MCF 10A (cell line): ENCODE measurements at regions of chr9 and their contacts with region 1.

Region 1: DNA sequence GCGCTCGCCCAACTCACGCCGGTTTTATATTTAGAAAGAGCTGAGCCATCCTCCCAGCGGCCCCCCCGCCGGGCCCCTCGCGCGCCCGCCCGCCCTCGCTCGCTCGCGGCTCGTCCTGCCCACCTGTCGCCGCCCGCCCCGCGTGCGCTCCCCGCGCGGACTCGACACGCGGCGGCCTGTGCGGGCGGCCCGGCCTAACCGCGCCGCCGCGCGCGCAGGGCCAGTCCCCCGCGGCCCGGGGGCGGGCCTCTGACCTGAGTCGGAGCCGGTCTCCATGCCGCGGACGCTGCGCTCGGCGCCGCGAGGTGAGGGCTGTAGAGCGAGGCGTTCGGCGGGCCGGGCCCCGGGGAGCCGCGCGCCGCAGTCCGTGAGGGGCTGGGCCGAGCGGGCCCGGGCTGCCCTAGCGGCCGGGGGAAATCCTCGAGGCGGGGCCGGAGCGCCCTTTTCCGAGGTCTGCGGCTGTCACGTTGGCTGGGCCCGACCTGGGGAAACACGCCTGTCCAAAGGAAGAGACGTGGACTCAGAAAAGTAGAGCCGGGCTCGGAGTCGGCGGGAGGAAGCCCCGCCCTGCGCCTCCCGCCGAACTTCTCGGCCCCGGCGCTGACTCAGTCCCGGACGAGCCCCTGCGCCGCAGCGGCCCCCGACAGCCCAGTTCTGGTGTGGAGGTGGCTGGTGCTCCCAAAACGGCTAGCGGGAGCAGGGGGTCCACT is at the start of gene ECPAS:
- DNase-seq: peak; percentile 87
- H3K4me3 Mint-ChIP-seq: peak within 1 kb of the TSS; percentile 84
- H3K27ac Mint-ChIP-seq: peak within 1 kb of the TSS; percentile 86
- H3K4me1 Mint-ChIP-seq: peaks cover 15% of the 10 kb centered on the region
- H3K27me3 Mint-ChIP-seq: no peaks in the 10 kb centered on the region
- CTCF ChIP-seq: no peak
- total RNA-seq, gene ECPAS: 140 and 152 TPM in 2 replicates

Region 2: DNA sequence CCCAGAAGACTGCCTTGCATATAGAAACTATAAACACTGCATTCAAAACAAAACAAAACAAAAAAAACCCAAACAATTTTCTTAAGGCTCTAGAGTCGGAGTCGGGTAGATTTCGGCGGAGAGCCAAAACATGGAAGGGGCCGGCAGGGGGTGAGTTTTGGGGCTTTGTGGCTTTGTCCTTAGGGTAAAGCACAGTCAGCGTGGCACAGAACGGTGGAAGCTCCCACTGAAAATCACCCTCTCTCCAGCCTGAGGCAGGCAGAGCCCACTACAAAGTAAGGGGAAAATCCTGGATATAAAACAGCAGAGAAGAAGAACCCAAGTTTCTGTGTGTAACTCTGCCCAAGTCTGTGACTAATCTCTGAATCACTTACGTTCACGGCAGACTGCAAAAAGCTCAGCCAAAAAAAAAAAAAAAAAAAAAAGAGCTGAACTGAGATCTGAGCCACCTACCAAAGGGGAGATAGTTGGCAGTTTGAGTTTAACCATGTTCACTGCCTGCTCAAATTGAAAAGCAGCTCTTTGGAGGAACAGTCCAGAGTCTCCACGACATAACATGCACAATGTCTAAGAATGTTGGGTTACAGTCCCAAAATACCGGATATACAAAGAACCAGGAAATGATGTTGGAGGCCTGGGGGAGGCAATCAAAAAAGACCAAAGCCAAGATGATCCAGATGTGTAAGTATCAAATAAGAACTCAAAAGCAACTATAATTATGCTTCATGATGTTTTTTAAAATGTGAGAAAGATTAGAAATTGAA is 127.4 kb before region 1 on chr9:
- CTCF ChIA-PET with region 1: no interaction called
- POLR2A ChIA-PET with region 1: no interaction called
- intact Hi-C with region 1: no loop called
- DNase-seq: peak; percentile 85
- H3K4me3 Mint-ChIP-seq: peak overlapping the region; percentile 75
- H3K27ac Mint-ChIP-seq: peak overlapping the region; percentile 95
- H3K4me1 Mint-ChIP-seq: peaks cover 18% of the 10 kb centered on the region
- H3K27me3 Mint-ChIP-seq: no peaks in the 10 kb centered on the region
- CTCF ChIP-seq: no peak

Region 3: DNA sequence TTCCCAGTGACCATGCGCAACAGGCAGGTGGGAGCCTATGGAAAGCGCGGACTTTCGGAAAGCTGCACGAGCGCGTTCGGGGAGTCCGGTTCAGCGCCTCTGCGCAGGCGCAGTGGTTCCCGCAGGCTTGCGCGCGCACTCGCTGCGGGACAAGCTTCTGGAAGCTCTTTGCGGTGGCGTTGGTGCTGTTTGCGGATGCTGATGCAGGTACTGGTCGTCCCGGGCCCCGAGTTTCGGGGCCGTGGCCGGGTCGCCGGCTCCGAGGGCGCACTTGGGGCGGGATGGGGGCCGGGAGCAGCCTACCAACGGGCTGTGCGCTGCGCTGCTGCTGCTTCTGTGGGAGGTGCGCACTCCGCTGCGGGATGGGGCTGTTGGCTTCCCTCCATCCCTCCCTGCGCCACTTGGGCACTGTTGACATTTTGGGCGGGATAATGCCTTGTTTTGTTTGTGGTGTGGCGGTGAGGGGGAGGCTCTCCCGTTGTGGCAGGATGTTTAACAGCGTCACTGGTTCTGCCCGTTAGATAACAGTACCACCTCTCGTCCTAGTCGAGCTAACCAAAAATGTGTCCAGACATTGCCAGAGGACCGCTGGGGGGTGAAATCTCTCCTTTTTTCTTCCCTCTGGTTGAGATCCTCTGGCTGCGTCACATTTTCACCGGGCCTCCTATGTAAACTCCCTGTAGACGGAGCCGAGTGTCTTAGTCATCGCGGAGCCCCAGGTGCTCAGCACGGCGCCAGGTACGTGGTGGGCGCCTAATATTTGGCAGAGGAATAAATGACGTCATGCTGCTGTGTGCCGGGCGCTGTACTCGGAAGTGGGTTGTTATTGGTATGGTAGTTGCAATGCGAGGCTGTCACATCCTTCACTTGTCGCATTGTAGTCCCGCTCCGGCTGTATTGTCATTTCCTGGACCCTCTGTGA is 41.3 kb after region 1 on chr9 and contains the start of gene ZNF483:
- CTCF ChIA-PET with region 1: interaction called, 3 read pairs
- POLR2A ChIA-PET with region 1: interaction called, 31 read pairs
- intact Hi-C with region 1: no loop called
- DNase-seq: peak; percentile 84
- H3K4me3 Mint-ChIP-seq: peak within 1 kb of the TSS; percentile 82
- H3K27ac Mint-ChIP-seq: peak within 1 kb of the TSS; percentile 68
- H3K4me1 Mint-ChIP-seq: peaks cover 15% of the 10 kb centered on the region
- H3K27me3 Mint-ChIP-seq: no peaks in the 10 kb centered on the region
- CTCF ChIP-seq: no peak
- total RNA-seq, gene ZNF483: 1.3 and 2.4 TPM in 2 replicates